ENCODE measurements at regions of chrX and their contacts with region 1.

Region 1: GRCh38 chrX:53433651-53434639 is at the start of gene HSD17B10:
- DNase-seq: peak; percentile 91
- H3K4me3 Mint-ChIP-seq: peak within 1 kb of the TSS; percentile 92
- H3K27ac Mint-ChIP-seq: peak within 1 kb of the TSS; percentile 83
- H3K4me1 Mint-ChIP-seq: peaks cover 33% of the 10 kb centered on the region
- H3K27me3 Mint-ChIP-seq: no peaks in the 10 kb centered on the region
- total RNA-seq, gene HSD17B10: 75.5 to 80.5 TPM

Region 2: DNA sequence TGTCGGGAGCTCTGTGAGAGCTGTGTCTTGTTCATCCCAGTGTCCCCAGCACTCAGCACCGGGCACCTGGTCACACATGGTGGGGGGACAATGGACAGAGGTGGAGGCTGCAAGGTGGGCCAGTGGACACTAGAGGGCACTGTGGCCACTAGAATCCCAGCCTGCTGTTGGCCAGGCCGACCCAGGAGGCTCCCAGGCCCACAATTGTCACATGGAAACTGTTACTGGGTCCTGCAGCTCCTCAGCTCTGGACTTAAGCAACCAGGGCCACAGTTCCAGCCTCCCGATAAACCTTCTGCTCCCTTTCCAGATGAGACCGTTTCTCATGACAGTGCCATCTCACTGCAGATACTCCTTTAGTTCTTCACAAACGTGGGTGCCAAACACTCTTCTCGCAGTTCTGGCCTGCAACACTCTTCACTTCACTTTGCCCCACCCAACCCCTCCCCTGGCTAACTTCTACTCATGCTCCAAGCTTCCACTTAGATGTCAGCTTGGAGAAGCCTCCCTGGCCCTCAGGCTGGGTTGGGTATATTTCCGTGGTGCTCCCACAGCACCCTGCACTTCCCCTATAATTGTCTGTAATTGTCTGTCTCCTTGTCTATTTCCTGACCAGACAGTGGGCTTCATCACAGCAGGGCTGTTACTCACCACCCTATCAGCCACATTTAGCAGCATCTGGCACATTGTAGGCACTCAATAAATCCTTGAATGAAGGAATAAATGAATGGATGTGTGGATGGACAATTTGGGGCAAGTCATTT is 149.1 kb before region 1 on chrX:
- CTCF ChIA-PET with region 1: interaction called, 6 read pairs
- POLR2A ChIA-PET with region 1: no interaction called
- intact Hi-C with region 1: loop called (anchors 10 kb)
- DNase-seq: peak; percentile 63
- H3K4me3 Mint-ChIP-seq: no peak overlapping the region
- H3K27ac Mint-ChIP-seq: no peak overlapping the region
- H3K4me1 Mint-ChIP-seq: peaks cover 18% of the 10 kb centered on the region
- H3K27me3 Mint-ChIP-seq: no peaks in the 10 kb centered on the region

Region 3: GRCh38 chrX:53422086-53422860 is 11.7 kb before region 1 on chrX and contains the start of gene SMC1A:
- CTCF ChIA-PET with region 1: interaction called, 9 read pairs
- POLR2A ChIA-PET with region 1: interaction called, 11 read pairs
- intact Hi-C with region 1: loop called (anchors 1 kb)
- DNase-seq: peak; percentile 97
- H3K4me3 Mint-ChIP-seq: peak within 1 kb of the TSS; percentile 90
- H3K27ac Mint-ChIP-seq: peak within 1 kb of the TSS; percentile 97
- H3K4me1 Mint-ChIP-seq: peaks cover 24% of the 10 kb centered on the region
- H3K27me3 Mint-ChIP-seq: no peaks in the 10 kb centered on the region
- total RNA-seq, gene SMC1A: 148 to 161 TPM

Measured in activated CD4-positive, alpha-beta memory T cell treated with anti-CD3 and anti-CD28 coated beads for 36 hours (primary cell).